Activated naive CD8-positive, alpha-beta T cell treated with anti-CD3 and anti-CD28 coated beads, Interleukin-2, amount 10 ng/mL, durations not matched to agents 7 days and 5 days (primary cell): ENCODE measurements at regions of chr7 and their contacts with region 1.

Region 1: GRCh38 chr7:66114793-66115649 is at the start of gene CRCP:
- DNase-seq: peak; percentile 87
- ATAC-seq: peak; percentile 94
- H3K4me3 Mint-ChIP-seq: peak within 1 kb of the TSS; percentile 100
- H3K27ac Mint-ChIP-seq: peak within 1 kb of the TSS; percentile 97
- H3K4me1 Mint-ChIP-seq: peaks cover 28% of the 10 kb centered on the region
- H3K27me3 Mint-ChIP-seq: no peaks in the 10 kb centered on the region
- total RNA-seq, gene CRCP: 30.2 to 31.5 TPM

Region 2: GRCh38 chr7:66075590-66076461 is 39.2 kb before region 1 on chr7 and contains the start of gene ASL:
- POLR2A ChIA-PET with region 1: interaction called, 21 read pairs
- DNase-seq: peak; percentile 93
- ATAC-seq: peak; percentile 98
- H3K4me3 Mint-ChIP-seq: peak within 1 kb of the TSS; percentile 95
- H3K27ac Mint-ChIP-seq: peak within 1 kb of the TSS; percentile 51
- H3K4me1 Mint-ChIP-seq: peaks cover 12% of the 10 kb centered on the region
- H3K27me3 Mint-ChIP-seq: no peaks in the 10 kb centered on the region
- total RNA-seq, gene ASL: 27.0 to 28.8 TPM

Region 3: DNA sequence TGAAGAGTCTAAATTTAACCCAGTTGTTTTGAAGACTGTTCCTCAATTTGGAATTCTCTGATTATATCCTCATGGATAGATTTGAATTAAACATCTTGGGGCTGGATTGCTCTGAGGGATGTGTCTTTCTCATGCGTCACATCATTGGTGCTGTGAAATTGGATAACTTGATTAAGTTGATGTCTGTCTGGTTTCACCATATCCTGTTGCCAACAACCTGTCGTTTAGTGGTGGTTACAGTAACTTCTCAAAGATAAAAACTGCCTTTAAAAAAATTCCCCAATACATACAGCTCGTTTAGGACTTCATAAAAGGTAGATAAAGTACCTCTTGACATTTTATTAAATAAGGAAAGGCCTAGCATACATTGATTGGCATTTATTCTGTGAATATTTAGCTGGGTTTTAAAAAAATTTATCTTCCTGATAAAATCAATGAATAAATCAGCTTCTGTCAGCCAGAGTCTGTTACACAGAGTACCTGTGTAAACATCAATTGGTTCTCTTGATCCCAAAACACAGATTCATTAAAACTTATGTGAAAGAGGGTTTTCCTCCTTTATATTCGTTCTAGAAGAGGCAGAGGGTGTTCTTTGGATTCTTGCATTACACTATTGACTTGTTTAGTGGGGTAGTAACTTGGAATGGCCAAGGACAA is 10.2 kb after region 1 on chr7:
- POLR2A ChIA-PET with region 1: interaction called, 10 read pairs
- DNase-seq: no peak
- ATAC-seq: no peak
- H3K4me3 Mint-ChIP-seq: no peak overlapping the region
- H3K27ac Mint-ChIP-seq: peak overlapping the region; percentile 64
- H3K4me1 Mint-ChIP-seq: peaks cover 28% of the 10 kb centered on the region
- H3K27me3 Mint-ChIP-seq: no peaks in the 10 kb centered on the region

Region 4: GRCh38 chr7:66333443-66333842 is 218.4 kb after region 1 on chr7:
- POLR2A ChIA-PET with region 1: no interaction called
- DNase-seq: no peak
- ATAC-seq: no peak
- H3K4me3 Mint-ChIP-seq: no peak overlapping the region
- H3K27ac Mint-ChIP-seq: no peak overlapping the region
- H3K4me1 Mint-ChIP-seq: no peaks in the 10 kb centered on the region
- H3K27me3 Mint-ChIP-seq: no peaks in the 10 kb centered on the region